ENCODE measurements at regions of chr1 and their contacts with region 1.

Region 1: DNA sequence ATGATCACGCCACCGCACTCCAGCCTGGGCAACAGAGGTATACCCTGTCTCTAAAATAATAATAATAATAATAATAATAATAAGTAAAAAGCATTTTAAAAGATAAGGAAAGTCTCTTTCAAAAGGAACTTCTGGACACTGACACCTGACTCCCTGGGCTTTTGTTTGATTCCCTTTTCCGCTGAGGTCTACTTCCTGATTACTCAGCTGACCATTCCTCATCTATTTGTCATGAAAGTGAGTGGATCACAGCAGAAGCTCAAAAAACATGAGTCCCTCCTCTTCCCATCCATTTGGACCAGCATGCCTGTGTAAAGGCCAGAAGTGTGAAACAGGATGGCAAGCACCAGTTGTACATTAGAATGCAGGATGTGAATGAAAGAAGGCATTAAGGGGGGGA is 61.1 kb upstream of the FBXO28 start:
- H3K4me3 ChIP-seq: no peak overlapping the region
- H3K27ac ChIP-seq: no peak overlapping the region
- H3K4me1 ChIP-seq: no peaks in the 10 kb centered on the region
- CTCF ChIP-seq: no peak

Region 2: GRCh38 chr1:223695941-223696340 is 356.8 kb before region 1 on chr1:
- CTCF ChIA-PET with region 1: interaction called, 23 read pairs
- POLR2A ChIA-PET with region 1: no interaction called
- H3K4me3 ChIP-seq: no peak overlapping the region
- H3K27ac ChIP-seq: no peak overlapping the region
- H3K4me1 ChIP-seq: peaks cover 3% of the 10 kb centered on the region
- CTCF ChIP-seq: no peak

Region 3: DNA sequence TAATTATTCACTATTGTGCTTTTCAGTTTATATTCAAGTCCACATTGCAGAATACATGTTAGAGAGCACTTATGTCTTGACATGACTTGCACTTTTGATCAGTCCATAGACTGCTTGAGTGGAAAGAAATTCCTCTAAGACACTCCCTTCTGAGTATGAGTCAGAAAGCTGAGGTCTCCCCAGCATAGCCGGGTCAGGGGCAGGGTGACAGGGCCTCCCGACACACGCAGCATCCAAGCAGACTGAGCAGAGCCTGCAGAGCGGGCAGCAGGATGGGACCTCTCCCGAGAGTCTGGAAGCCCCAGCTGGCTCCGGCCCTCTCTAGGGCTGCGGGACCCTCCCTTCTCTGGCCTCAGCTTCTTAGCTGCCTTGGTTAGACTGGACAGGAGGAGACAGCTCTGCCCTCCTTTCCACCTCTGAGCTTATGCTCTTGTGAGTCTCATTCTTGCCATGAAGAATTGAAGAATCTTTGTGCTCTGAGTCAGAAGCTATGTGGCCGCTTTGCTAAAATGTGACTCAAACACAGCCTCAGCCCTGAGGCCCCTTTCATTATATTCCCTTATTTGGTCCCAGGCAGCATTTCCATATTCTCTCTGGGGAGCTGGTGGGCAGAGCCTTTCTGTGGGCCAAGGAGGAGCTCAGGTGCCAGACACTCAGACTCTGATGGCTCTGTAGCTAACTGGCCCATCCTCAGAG is 351.7 kb before region 1 on chr1:
- CTCF ChIA-PET with region 1: interaction called, 23 read pairs
- POLR2A ChIA-PET with region 1: no interaction called
- H3K4me3 ChIP-seq: no peak overlapping the region
- H3K27ac ChIP-seq: peak overlapping the region; percentile 38; the same call in 1 of the 2 replicates
- H3K4me1 ChIP-seq: peaks cover 15% of the 10 kb centered on the region
- CTCF ChIP-seq: no peak

Region 4: DNA sequence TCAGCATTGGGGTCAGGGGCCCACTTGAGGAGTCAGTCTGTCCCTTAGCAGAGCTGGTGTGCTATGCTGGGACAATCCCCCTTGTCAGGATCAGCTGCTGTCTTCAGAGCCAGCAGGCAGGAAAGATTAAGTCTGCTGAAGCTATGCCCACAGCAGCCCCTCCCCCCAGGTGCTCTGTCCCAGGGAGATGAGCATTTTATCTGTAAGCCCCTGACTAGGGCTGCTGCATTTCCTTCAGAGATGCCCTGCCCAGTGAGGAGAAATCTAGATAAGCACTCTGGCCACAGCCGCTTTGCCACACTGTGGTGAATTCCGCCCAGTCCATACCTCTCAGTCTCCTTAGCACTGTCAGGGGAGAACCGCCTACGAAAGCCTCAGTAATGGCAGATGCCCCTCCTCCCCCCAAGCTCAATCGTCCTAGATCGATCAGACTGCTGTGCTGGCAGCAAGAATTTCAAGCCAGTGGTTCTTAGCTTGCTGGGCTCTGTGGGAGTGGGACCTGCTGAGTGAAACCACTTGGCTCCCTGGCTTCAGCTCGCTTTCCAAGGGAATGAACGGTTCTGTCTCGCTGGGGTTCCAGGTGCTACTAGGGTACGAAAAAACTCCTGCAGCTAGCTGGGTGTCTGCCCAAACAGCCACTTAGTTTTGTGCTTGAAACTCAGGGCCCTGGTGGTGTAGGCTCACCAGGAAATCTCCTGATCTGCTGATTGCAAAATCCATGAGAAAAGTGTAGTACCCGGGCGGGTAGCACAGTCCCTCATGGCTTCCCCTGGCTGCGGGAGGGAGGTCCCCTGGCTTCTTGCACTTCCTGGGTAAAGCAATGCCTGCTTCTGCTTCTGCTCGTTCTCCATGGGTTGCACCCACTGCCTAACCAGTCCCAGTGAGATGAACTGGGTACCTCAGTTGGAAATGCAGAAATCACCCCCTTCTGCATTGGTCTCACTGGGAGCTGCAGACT is 181.9 kb before region 1 on chr1:
- CTCF ChIA-PET with region 1: no interaction called
- POLR2A ChIA-PET with region 1: no interaction called
- H3K4me3 ChIP-seq: no peak overlapping the region
- H3K27ac ChIP-seq: no peak overlapping the region
- H3K4me1 ChIP-seq: no peaks in the 10 kb centered on the region
- CTCF ChIP-seq: no peak

Region 5: DNA sequence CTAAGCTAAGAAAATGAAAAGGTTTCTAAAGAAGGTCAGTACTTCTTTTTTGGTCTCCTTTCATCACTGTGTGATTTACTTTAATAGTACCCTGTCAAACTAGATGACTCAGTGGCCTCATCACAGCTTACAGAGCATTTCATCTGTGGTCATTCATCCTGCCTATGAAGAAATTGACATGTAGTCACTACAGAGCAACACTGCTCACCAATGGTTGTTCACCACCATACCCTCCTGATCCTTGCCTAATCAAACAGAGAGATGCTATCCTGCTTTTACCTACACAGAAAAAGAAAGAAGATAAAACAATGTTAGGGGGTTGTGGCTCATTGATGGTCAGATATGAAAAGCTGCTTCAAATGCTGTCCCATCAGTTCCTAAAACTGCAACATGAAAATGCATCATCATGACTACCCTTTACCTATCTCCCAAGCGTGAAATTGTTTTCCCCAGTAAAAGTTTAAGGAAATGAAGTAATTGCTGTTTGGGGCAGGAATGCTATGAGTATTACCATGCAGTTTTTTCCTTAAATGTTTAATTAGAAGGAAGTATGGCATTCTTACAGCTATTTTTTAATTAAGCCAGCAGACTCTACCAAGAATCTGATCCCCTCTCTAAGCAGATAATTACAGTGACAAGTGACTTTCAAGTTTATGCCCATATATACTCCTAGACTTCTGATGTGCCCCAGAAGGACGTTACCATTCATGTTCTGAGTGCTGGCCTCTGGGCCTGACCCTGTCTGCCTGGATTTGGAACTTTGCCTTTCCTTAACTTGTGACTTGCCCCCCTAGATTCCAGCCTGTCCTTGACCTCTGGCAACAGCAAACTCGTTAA is 15.1 kb after region 1 on chr1:
- CTCF ChIA-PET with region 1: interaction called, 59 read pairs
- POLR2A ChIA-PET with region 1: interaction called, 5 read pairs
- H3K4me3 ChIP-seq: no peak overlapping the region
- H3K27ac ChIP-seq: no peak overlapping the region
- H3K4me1 ChIP-seq: peaks cover 28% of the 10 kb centered on the region
- CTCF ChIP-seq: no peak

Region 6: DNA sequence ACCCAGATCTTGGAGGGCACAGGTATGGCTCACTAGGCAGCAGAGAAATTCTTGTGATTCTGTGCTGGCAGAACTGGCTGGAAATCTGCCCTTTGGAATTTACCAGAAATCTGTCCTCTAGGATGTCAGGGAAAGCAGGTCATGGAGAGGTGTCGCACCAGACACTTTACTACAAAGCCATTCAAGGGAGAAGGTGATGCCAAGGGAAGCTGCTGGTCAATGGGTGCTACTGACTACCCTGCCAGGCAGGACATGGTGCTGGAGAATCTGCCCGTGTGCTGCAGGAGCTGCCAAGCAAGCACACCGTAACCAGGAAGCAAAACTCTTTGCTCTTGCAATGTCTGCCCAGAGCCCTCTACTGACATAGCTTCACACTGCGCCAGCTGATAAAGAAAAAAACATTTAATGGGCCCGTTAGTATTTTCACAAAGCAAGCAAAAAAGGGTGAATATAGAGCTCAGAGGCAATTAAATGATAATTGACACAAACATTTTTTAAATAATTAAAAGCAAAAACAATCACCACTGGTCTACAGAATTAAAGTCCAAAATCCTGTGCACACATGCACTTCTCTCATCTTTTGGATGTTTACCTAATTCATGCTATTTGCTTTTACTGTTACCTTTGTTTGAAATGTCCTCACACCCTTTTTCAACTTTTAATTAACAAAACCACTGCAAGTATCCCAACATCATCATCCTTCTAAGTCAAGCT is 54.0 kb after region 1 on chr1:
- CTCF ChIA-PET with region 1: interaction called, 18 read pairs
- POLR2A ChIA-PET with region 1: no interaction called
- H3K4me3 ChIP-seq: no peak overlapping the region
- H3K27ac ChIP-seq: no peak overlapping the region
- H3K4me1 ChIP-seq: no peaks in the 10 kb centered on the region
- CTCF ChIP-seq: peak; percentile 72

Region 7: GRCh38 chr1:224266105-224266935 is 213.5 kb after region 1 on chr1:
- CTCF ChIA-PET with region 1: no interaction called
- POLR2A ChIA-PET with region 1: no interaction called
- H3K4me3 ChIP-seq: no peak overlapping the region
- H3K27ac ChIP-seq: 0 out of 2 replicates have a peak overlapping the region, but pooled peaks have one; percentile 5
- H3K4me1 ChIP-seq: peaks cover 16% of the 10 kb centered on the region; the same call in 1 of the 2 replicates
- CTCF ChIP-seq: no peak

Measured in HEK293 (cell line).